ENCODE measurements at regions of chr13 and their contacts with region 1.

Region 1: DNA sequence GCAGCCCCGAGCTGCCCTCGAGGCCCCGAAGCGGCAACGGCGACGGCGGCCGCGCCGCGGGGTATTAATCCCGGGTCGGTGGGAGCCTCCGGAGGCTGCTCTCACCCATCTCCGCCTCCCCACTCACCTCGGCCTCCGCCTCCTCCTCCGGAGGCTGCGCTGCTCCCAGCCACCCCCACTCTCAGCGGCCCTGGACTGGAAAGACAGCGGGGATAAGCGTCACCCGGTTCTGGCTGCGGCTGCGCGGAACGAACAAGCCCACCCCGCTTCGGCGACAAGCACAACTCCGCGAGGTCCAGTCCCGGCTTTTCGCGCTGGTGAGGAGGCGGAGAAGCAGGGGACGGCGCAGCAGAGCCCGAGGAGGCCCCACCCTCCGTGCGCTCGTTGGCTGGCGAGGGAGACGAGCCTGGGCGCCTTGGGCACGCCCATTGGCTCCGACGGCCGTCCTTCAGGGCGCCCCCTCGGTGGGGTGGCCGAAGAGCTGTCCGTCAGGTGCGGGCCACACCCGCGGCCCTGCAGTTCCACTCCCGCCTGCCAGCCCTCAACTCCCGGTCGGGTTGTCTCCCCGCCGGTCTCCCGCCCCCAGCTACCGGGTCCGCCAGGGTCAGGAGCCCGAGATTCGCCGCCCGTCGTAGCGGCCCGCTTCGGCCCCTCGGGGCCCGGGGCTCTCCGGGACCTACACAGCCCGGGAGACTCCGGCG is at the start of gene ZMYM5:
- DNase-seq: peak; percentile 99
- H3K4me3 Mint-ChIP-seq: peak within 1 kb of the TSS; percentile 92
- H3K27ac Mint-ChIP-seq: peak within 1 kb of the TSS; percentile 88
- H3K4me1 Mint-ChIP-seq: peaks cover 13% of the 10 kb centered on the region
- H3K27me3 Mint-ChIP-seq: no peaks in the 10 kb centered on the region
- CTCF ChIP-seq: no peak
- total RNA-seq, gene ZMYM5: 12.1 and 14.4 TPM in 2 replicates

Region 2: DNA sequence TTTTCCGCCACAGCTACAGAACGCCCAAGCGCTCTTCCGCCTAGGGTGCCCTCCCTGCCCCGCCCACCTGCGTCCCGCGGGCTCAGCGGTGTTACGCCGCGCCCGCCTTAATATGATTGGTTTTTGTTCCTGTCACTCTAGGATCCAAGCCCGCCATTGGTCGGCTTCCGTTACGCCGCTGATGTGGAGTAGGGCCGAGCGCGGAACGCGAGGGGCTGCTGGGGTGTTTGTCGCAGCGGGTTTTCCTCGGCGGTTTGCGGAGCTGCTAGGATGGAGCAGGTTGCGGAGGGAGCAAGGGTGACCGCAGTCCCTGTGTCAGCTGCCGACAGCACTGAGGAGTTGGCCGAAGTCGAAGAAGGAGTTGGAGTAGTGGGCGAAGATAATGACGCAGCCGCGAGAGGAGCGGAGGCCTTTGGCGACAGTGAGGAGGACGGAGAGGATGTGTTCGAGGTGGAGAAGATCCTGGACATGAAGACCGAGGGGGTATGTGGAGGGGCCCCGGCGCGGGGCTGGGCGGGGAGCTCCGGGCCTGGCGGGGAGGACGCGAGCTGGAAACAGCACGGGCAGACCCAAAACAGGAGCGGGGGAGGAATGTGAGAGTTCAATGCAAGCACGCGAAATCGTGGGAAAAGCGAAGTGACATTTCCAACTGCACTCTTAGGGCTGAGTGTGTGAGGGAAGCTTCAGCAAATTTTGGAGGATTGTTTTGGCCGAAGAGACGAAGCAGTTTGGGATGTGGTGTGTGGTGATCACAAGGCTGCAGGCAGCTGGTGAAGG is 229.8 kb before region 1 on chr13 and contains the start of gene MPHOSPH8:
- CTCF ChIA-PET with region 1: no interaction called
- POLR2A ChIA-PET with region 1: interaction called, 11 read pairs
- intact Hi-C with region 1: no loop called
- DNase-seq: peak; percentile 94
- H3K4me3 Mint-ChIP-seq: peak within 1 kb of the TSS; percentile 100
- H3K27ac Mint-ChIP-seq: peak within 1 kb of the TSS; percentile 99
- H3K4me1 Mint-ChIP-seq: no peaks in the 10 kb centered on the region
- H3K27me3 Mint-ChIP-seq: no peaks in the 10 kb centered on the region
- CTCF ChIP-seq: no peak
- total RNA-seq, gene MPHOSPH8: 31.9 and 32.4 TPM in 2 replicates

Region 3: GRCh38 chr13:19782049-19782726 is 81.3 kb before region 1 on chr13:
- CTCF ChIA-PET with region 1: interaction called, 3 read pairs
- POLR2A ChIA-PET with region 1: interaction called, 11 read pairs
- intact Hi-C with region 1: loop called (anchors 2 kb)
- DNase-seq: peak; percentile 52
- H3K4me3 Mint-ChIP-seq: peak overlapping the region; percentile 89
- H3K27ac Mint-ChIP-seq: peak overlapping the region; percentile 87
- H3K4me1 Mint-ChIP-seq: peaks cover 13% of the 10 kb centered on the region
- H3K27me3 Mint-ChIP-seq: no peaks in the 10 kb centered on the region
- CTCF ChIP-seq: no peak

Region 4: GRCh38 chr13:19852766-19853165 is 10.7 kb before region 1 on chr13:
- CTCF ChIA-PET with region 1: interaction called, 4 read pairs
- POLR2A ChIA-PET with region 1: interaction called, 30 read pairs
- intact Hi-C with region 1: no loop called
- DNase-seq: no peak
- H3K4me3 Mint-ChIP-seq: no peak overlapping the region
- H3K27ac Mint-ChIP-seq: no peak overlapping the region
- H3K4me1 Mint-ChIP-seq: no peaks in the 10 kb centered on the region
- H3K27me3 Mint-ChIP-seq: no peaks in the 10 kb centered on the region
- CTCF ChIP-seq: no peak

Region 5: GRCh38 chr13:19959831-19960652 is 96.6 kb after region 1 on chr13:
- CTCF ChIA-PET with region 1: interaction called, 6 read pairs
- POLR2A ChIA-PET with region 1: interaction called, 13 read pairs
- intact Hi-C with region 1: loop called (anchors 2 kb)
- DNase-seq: peak; percentile 92
- H3K4me3 Mint-ChIP-seq: peak overlapping the region; percentile 92
- H3K27ac Mint-ChIP-seq: peak overlapping the region; percentile 88
- H3K4me1 Mint-ChIP-seq: peaks cover 6% of the 10 kb centered on the region
- H3K27me3 Mint-ChIP-seq: no peaks in the 10 kb centered on the region
- CTCF ChIP-seq: peak; percentile 71

Measured in MCF 10A (cell line).